GM12878 (cell line): ENCODE measurements at regions of chr10 and their contacts with region 1.

Region 1: GRCh38 chr10:2978111-2978510 is 89.2 kb upstream of the PFKP start:
- DNase-seq: peak; percentile 32
- ATAC-seq: peak; percentile 87
- H3K4me3 ChIP-seq: no peak overlapping the region
- H3K27ac ChIP-seq: no peak overlapping the region
- H3K4me1 ChIP-seq: peaks cover 8% of the 10 kb centered on the region
- H3K27me3 ChIP-seq: no peaks in the 10 kb centered on the region
- CTCF ChIP-seq: peak; percentile 45 to 78 (median 47); a peak in 5 of 6 replicates
- EP300 ChIP-seq: no peak
- POLR2A ChIP-seq: no peak
- RAD21 ChIP-seq: peak; percentile 84

Region 2: DNA sequence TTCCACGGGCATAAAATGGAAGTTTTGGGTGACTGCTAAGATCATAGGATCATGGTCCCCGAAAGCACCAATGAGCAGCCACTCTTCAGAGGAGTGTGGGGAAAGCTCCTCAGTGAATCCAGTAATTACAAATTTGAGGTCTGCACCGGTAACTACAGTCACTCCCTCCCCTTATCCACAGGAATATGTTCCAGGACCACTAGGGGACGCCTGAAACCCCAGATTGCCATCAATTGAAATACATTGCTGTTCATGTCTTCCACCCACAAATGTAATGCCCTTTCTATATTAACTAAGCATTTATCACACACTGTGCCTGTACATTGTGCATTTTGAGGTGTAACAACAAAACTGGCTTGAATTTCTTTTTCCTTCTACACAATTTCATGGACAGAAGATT is 358.6 kb before region 1 on chr10:
- CTCF ChIA-PET with region 1: interaction called, 3 read pairs
- POLR2A ChIA-PET with region 1: no interaction called
- RAD21 ChIA-PET with region 1: no interaction called
- SMC1A ChIA-PET with region 1: no interaction called
- in situ Hi-C with region 1: no loop called
- intact Hi-C with region 1: loop called (anchors 1 kb)
- DNase-seq: no peak
- ATAC-seq: peak; percentile 79
- H3K4me3 ChIP-seq: no peak overlapping the region
- H3K27ac ChIP-seq: no peak overlapping the region
- H3K4me1 ChIP-seq: no peaks in the 10 kb centered on the region
- H3K27me3 ChIP-seq: no peaks in the 10 kb centered on the region
- CTCF ChIP-seq: peak; percentile 33 to 64 (median 58); a peak in 5 of 6 replicates
- EP300 ChIP-seq: no peak
- POLR2A ChIP-seq: no peak
- RAD21 ChIP-seq: 0 out of 2 replicates have a peak, but pooled peaks have one; percentile 15

Region 3: DNA sequence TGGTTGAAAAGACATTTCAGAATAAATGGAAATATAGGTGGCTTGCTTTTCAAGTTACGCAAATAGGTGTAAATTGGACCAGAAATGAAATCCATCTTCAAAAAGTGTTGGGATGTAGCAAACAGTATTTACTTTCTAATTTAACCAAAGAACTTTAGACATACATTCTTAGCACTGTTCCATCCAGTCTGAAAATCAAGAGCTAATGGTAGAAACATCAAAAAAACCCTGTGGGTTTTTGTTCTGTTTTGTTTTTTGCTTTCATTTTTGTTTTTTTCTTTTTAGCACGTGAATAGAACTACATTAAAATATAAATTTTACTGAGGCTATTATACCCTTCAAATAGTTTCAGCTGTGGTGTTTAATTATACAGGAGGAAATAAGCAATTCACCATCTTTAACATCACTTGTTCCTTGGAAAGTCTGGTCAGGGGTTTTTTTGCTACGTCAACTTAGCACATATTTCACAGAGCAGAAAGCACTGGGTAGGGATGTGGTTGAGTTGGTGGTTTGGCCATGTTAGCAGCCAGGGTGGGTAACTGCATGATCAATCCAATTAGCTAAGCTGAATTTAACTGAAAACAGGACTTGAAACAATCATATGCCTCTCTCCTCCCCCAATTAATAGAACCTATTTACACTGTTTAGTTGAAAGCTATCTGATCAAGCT is 186.2 kb before region 1 on chr10:
- CTCF ChIA-PET with region 1: no interaction called
- POLR2A ChIA-PET with region 1: no interaction called
- RAD21 ChIA-PET with region 1: no interaction called
- SMC1A ChIA-PET with region 1: no interaction called
- in situ Hi-C with region 1: no loop called
- intact Hi-C with region 1: no loop called
- DNase-seq: peak; percentile 87
- ATAC-seq: peak; percentile 98
- H3K4me3 ChIP-seq: no peak overlapping the region
- H3K27ac ChIP-seq: no peak overlapping the region
- H3K4me1 ChIP-seq: no peaks in the 10 kb centered on the region
- H3K27me3 ChIP-seq: no peaks in the 10 kb centered on the region
- CTCF ChIP-seq: no peak
- EP300 ChIP-seq: peak; percentile 85 to 88; a peak in 2 of 4 replicates
- POLR2A ChIP-seq: no peak
- RAD21 ChIP-seq: no peak

Region 4: GRCh38 chr10:2839081-2839725 is 138.9 kb before region 1 on chr10:
- CTCF ChIA-PET with region 1: interaction called, 4 read pairs
- POLR2A ChIA-PET with region 1: no interaction called
- RAD21 ChIA-PET with region 1: no interaction called
- SMC1A ChIA-PET with region 1: no interaction called
- in situ Hi-C with region 1: no loop called
- intact Hi-C with region 1: loop called (anchors 5 kb)
- DNase-seq: no peak
- ATAC-seq: peak; percentile 63
- H3K4me3 ChIP-seq: no peak overlapping the region
- H3K27ac ChIP-seq: no peak overlapping the region
- H3K4me1 ChIP-seq: no peaks in the 10 kb centered on the region
- H3K27me3 ChIP-seq: no peaks in the 10 kb centered on the region; a peak in 1 of 4 replicates
- CTCF ChIP-seq: peak; percentile 40 to 64 (median 62)
- EP300 ChIP-seq: no peak
- POLR2A ChIP-seq: no peak
- RAD21 ChIP-seq: peak; percentile 26; the same call in 1 of the 2 replicates

Region 5: DNA sequence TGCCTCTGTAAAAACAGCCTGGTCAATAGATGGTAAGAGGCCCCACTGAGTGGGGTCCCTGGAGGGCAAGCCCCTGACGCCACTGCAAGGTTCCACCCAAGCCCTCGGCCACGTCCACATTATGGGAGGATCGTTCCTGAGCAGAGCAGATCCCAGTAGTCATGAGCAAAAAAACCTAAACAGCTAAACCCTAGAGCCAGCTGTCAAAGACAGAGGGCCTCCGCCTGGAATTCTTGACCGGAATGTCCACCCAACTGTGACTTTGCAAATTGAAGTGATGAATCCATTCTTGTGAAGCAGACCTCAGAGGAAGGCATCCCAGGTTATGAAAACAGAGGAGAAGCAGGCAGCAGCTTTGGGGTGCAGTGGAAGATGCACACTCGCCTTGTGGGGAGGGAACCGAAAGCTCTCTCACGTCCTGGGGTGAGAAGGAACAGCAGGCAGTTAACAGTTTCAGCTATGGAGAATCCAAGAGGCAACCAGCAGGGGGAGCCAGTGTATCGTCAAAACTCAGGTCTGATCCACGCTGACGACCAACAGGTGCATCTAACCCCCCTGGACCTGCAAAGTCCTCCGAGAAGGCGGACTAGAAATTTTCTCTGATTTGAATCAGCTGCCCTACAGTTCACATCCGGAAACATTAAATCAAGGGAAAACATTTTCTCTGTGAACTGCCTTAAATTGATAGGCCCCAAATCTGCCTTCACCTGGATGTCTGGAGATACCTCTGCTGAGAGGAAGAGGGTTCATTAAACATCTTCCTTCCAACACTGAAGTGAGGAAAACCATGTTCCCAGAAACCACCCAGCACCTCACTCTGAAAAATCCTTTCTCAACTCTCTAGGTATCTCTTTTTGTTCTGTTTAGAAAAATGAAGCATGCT is 49.9 kb before region 1 on chr10:
- CTCF ChIA-PET with region 1: interaction called, 20 read pairs
- POLR2A ChIA-PET with region 1: no interaction called
- RAD21 ChIA-PET with region 1: interaction called, 12 read pairs
- SMC1A ChIA-PET with region 1: interaction called, 8 read pairs
- in situ Hi-C with region 1: no loop called
- intact Hi-C with region 1: loop called (anchors 1 kb)
- DNase-seq: peak; percentile 54
- ATAC-seq: peak; percentile 98
- H3K4me3 ChIP-seq: no peak overlapping the region
- H3K27ac ChIP-seq: no peak overlapping the region
- H3K4me1 ChIP-seq: no peaks in the 10 kb centered on the region
- H3K27me3 ChIP-seq: peaks cover 3 to 5% of the 10 kb centered on the region in 2 experiments; a peak in 3 of 4 replicates
- CTCF ChIP-seq: peak; percentile 73 to 85 (median 74)
- EP300 ChIP-seq: no peak
- POLR2A ChIP-seq: no peak
- RAD21 ChIP-seq: peak; percentile 85

Region 6: GRCh38 chr10:2938869-2939268 is 39.2 kb before region 1 on chr10:
- CTCF ChIA-PET with region 1: interaction called, 11 read pairs
- POLR2A ChIA-PET with region 1: no interaction called
- RAD21 ChIA-PET with region 1: no interaction called
- SMC1A ChIA-PET with region 1: interaction called, 3 read pairs
- in situ Hi-C with region 1: no loop called
- intact Hi-C with region 1: no loop called
- DNase-seq: no peak
- ATAC-seq: no peak
- H3K4me3 ChIP-seq: no peak overlapping the region
- H3K27ac ChIP-seq: no peak overlapping the region
- H3K4me1 ChIP-seq: no peaks in the 10 kb centered on the region
- H3K27me3 ChIP-seq: peaks cover 0 to 3% of the 10 kb centered on the region in 2 experiments; a peak in 2 of 4 replicates
- CTCF ChIP-seq: no peak; a peak in 1 of 6 replicates
- EP300 ChIP-seq: no peak
- POLR2A ChIP-seq: no peak
- RAD21 ChIP-seq: peak; percentile 14; the same call in 1 of the 2 replicates

Region 7: DNA sequence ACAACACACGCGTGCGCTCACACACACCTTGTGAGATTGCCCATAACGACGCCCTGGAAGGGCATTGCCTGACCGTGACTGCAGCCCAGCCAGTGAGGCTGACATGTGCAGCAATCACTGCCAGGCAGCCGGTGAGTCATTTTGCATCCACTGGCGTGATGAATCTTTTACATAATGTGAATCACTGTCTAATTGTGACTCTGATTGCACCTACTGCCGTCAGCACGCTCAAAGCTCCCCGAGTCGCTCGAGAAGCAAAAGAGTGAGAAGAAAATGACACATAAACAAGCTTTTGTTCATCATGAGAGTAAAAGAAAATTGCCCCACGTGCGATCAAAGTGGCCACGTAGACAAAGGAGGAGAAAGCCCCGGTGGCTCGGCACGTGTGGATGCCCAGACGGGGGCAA is 28.2 kb before region 1 on chr10:
- CTCF ChIA-PET with region 1: interaction called, 20 read pairs
- POLR2A ChIA-PET with region 1: no interaction called
- RAD21 ChIA-PET with region 1: interaction called, 4 read pairs
- SMC1A ChIA-PET with region 1: interaction called, 8 read pairs
- in situ Hi-C with region 1: no loop called
- intact Hi-C with region 1: loop called (anchors 2 kb)
- DNase-seq: peak; percentile 43
- ATAC-seq: peak; percentile 81
- H3K4me3 ChIP-seq: no peak overlapping the region
- H3K27ac ChIP-seq: no peak overlapping the region
- H3K4me1 ChIP-seq: peaks cover 24% of the 10 kb centered on the region
- H3K27me3 ChIP-seq: no peaks in the 10 kb centered on the region
- CTCF ChIP-seq: no peak
- EP300 ChIP-seq: peak; percentile 30 to 67; a peak in 2 of 4 replicates
- POLR2A ChIP-seq: no peak
- RAD21 ChIP-seq: no peak

Region 8: DNA sequence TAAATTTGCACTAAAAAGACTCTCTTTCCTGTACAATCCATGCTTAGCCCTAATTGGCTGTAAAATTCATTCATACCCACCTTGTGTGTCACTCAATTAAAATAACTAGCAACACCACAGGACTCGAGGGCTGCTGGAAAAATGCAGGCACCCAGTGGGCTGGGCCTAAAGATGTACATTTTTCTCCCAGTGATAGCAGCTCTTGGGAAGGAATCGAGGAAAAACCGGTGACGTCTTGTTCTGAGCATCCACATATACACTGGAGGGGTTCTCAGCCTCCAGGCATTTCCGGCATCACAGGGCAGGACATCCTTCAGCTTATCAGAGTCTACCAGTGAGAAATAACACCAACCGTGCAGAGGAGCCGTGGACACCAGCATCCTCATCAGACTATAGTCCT is 280.3 kb after region 1 on chr10:
- CTCF ChIA-PET with region 1: no interaction called
- POLR2A ChIA-PET with region 1: no interaction called
- RAD21 ChIA-PET with region 1: no interaction called
- SMC1A ChIA-PET with region 1: no interaction called
- in situ Hi-C with region 1: no loop called
- intact Hi-C with region 1: no loop called
- DNase-seq: no peak
- ATAC-seq: no peak
- H3K4me3 ChIP-seq: no peak overlapping the region
- H3K27ac ChIP-seq: no peak overlapping the region
- H3K4me1 ChIP-seq: no peaks in the 10 kb centered on the region
- H3K27me3 ChIP-seq: no peaks in the 10 kb centered on the region
- CTCF ChIP-seq: no peak
- EP300 ChIP-seq: no peak
- POLR2A ChIP-seq: no peak
- RAD21 ChIP-seq: no peak

Region 9: GRCh38 chr10:3357737-3358136 is 379.6 kb after region 1 on chr10:
- CTCF ChIA-PET with region 1: no interaction called
- POLR2A ChIA-PET with region 1: no interaction called
- RAD21 ChIA-PET with region 1: no interaction called
- SMC1A ChIA-PET with region 1: no interaction called
- in situ Hi-C with region 1: no loop called
- intact Hi-C with region 1: no loop called
- DNase-seq: no peak
- ATAC-seq: no peak
- H3K4me3 ChIP-seq: no peak overlapping the region
- H3K27ac ChIP-seq: no peak overlapping the region
- H3K4me1 ChIP-seq: no peaks in the 10 kb centered on the region
- H3K27me3 ChIP-seq: no peaks in the 10 kb centered on the region
- CTCF ChIP-seq: no peak
- EP300 ChIP-seq: no peak
- POLR2A ChIP-seq: no peak
- RAD21 ChIP-seq: no peak